PC-9 (cell line): ENCODE measurements at regions of chr5 and their contacts with region 1.

Region 1: GRCh38 chr5:112228667-112229066 is 190.4 kb downstream of the EPB41L4A start:
- DNase-seq: peak; percentile 91 to 95
- H3K4me3 ChIP-seq: no peak overlapping the region; the same call in 1 of the 2 replicates
- H3K27ac ChIP-seq: peak overlapping the region; percentile 60
- H3K4me1 ChIP-seq: peaks cover 41% of the 10 kb centered on the region
- H3K27me3 ChIP-seq: no peaks in the 10 kb centered on the region
- CTCF ChIP-seq: no peak

Region 2: GRCh38 chr5:112014783-112015395 is 213.8 kb before region 1 on chr5:
- CTCF ChIA-PET with region 1: no interaction called
- POLR2A ChIA-PET with region 1: no interaction called
- intact Hi-C with region 1: no loop called
- DNase-seq: no peak
- H3K4me3 ChIP-seq: no peak overlapping the region
- H3K27ac ChIP-seq: no peak overlapping the region
- H3K4me1 ChIP-seq: no peaks in the 10 kb centered on the region
- H3K27me3 ChIP-seq: no peaks in the 10 kb centered on the region
- CTCF ChIP-seq: no peak

Region 3: GRCh38 chr5:112183103-112183711 is 45.5 kb before region 1 on chr5:
- CTCF ChIA-PET with region 1: no interaction called
- POLR2A ChIA-PET with region 1: no interaction called
- intact Hi-C with region 1: loop called (anchors 5 kb)
- DNase-seq: peak; percentile 52 to 78
- H3K4me3 ChIP-seq: no peak overlapping the region
- H3K27ac ChIP-seq: no peak overlapping the region
- H3K4me1 ChIP-seq: 0 out of 2 replicates have a peak, but pooled peaks cover 14% of the 10 kb centered on the region
- H3K27me3 ChIP-seq: no peaks in the 10 kb centered on the region
- CTCF ChIP-seq: no peak

Region 4: GRCh38 chr5:112210430-112211005 is 18.1 kb before region 1 on chr5:
- CTCF ChIA-PET with region 1: no interaction called
- POLR2A ChIA-PET with region 1: no interaction called
- intact Hi-C with region 1: loop called (anchors 2 kb)
- DNase-seq: peak in 1 of 2 experiments; percentile 36
- H3K4me3 ChIP-seq: no peak overlapping the region
- H3K27ac ChIP-seq: no peak overlapping the region
- H3K4me1 ChIP-seq: no peaks in the 10 kb centered on the region
- H3K27me3 ChIP-seq: no peaks in the 10 kb centered on the region
- CTCF ChIP-seq: peak; percentile 76

Region 5: DNA sequence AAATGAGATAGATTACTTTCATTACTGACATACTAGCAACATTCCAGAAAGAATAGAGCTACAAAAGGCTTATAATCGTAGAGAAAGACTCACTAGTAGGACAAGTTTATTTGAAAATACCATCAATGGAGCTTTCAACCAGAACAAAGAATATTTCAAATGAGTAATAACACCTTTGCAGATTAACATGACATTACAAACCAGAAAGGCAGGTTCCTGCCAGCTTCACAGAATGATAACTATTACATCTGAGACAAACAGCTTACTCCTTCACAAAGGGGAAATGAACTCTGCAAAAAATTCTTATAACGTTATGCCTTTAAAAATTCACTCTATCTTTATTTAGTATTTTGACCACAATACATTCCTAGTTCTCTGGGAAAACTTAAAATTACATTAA is 87.3 kb after region 1 on chr5:
- CTCF ChIA-PET with region 1: no interaction called
- POLR2A ChIA-PET with region 1: interaction called, 3 read pairs
- intact Hi-C with region 1: loop called (anchors 1 kb)
- DNase-seq: peak; percentile 16 to 81
- H3K4me3 ChIP-seq: no peak overlapping the region
- H3K27ac ChIP-seq: no peak overlapping the region
- H3K4me1 ChIP-seq: no peaks in the 10 kb centered on the region; the same call in 1 of the 2 replicates
- H3K27me3 ChIP-seq: no peaks in the 10 kb centered on the region
- CTCF ChIP-seq: no peak

Region 6: DNA sequence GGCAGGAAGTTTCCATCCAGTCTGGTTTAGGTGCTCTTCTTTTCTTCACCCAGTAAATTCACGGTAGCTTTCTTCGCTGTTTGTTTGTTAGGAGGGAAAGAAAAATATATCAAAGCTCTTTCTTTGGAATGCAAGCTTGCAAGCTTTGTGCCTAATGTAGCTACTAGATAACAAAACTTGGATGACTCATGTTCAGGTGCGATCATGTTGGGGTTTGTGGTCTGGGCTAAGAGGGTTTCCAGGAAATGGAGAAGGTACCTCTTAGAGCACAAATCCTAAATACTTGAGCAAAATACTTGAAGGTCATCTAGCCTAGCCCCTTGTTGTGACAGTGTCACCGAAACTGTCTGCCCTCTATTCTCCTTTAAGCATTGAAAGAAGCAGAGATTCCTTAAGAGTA is 650.1 kb after region 1 on chr5:
- CTCF ChIA-PET with region 1: no interaction called
- POLR2A ChIA-PET with region 1: no interaction called
- intact Hi-C with region 1: loop called (anchors 5 kb)
- DNase-seq: peak; percentile 43 to 90
- H3K4me3 ChIP-seq: no peak overlapping the region; the same call in 1 of the 2 replicates
- H3K27ac ChIP-seq: peak overlapping the region; percentile 48
- H3K4me1 ChIP-seq: peaks cover 26% of the 10 kb centered on the region
- H3K27me3 ChIP-seq: no peaks in the 10 kb centered on the region
- CTCF ChIP-seq: no peak